ENCODE measurements at regions of chr10 and their contacts with region 1.

Region 1: GRCh38 chr10:71638064-71638821 is 81.3 kb downstream of the C10orf105 start:
- DNase-seq: peak; percentile 52
- CTCF ChIP-seq: no peak

Region 2: DNA sequence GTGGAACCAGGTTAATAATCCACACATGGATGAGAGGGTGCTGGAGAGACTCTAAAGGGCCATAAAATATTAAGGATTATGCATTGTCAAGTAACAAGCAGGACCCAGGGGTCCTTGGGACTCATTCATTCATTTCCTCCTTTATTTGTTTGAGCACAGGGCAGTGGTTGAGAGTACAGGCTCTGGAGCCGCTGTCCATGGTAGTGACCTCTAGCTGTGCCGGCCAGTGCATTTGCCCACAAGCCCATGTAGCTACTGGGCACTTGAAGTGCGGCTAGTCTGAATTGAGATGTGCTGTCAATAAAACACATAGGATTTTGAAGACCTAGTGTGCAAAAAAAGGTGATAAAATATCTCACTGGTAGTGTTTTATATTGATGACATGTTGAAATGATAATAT is 56.2 kb before region 1 on chr10:
- CTCF ChIA-PET with region 1: no interaction called
- POLR2A ChIA-PET with region 1: no interaction called
- DNase-seq: no peak
- CTCF ChIP-seq: no peak

Region 3: GRCh38 chr10:71623098-71623985 is 14.9 kb before region 1 on chr10:
- CTCF ChIA-PET with region 1: interaction called, 18 read pairs
- POLR2A ChIA-PET with region 1: no interaction called
- DNase-seq: no peak
- CTCF ChIP-seq: no peak